CD4-positive, alpha-beta T cell (primary cell): ENCODE measurements at regions of chr2 and their contacts with region 1.

Region 1: GRCh38 chr2:74833418-74834233 is at the start of gene HK2:
- DNase-seq: peak; percentile 54 to 92 (median 72)
- ATAC-seq: peak; percentile 84
- H3K4me3 ChIP-seq: peak within 1 kb of the TSS; percentile 75
- H3K4me3 Mint-ChIP-seq: peak within 1 kb of the TSS; percentile 94
- H3K27ac ChIP-seq: peak within 1 kb of the TSS in 1 of 2 donors; percentile 27
- H3K27ac Mint-ChIP-seq: peak within 1 kb of the TSS; percentile 84
- H3K4me1 ChIP-seq: peaks cover 42% of the 10 kb centered on the region
- H3K4me1 Mint-ChIP-seq: peaks cover 36% of the 10 kb centered on the region
- H3K27me3 ChIP-seq: no peaks in the 10 kb centered on the region
- H3K27me3 Mint-ChIP-seq: no peaks in the 10 kb centered on the region
- CTCF ChIP-seq: no peak
- total RNA-seq, gene HK2: 7.7 to 8.9 TPM

Region 2: DNA sequence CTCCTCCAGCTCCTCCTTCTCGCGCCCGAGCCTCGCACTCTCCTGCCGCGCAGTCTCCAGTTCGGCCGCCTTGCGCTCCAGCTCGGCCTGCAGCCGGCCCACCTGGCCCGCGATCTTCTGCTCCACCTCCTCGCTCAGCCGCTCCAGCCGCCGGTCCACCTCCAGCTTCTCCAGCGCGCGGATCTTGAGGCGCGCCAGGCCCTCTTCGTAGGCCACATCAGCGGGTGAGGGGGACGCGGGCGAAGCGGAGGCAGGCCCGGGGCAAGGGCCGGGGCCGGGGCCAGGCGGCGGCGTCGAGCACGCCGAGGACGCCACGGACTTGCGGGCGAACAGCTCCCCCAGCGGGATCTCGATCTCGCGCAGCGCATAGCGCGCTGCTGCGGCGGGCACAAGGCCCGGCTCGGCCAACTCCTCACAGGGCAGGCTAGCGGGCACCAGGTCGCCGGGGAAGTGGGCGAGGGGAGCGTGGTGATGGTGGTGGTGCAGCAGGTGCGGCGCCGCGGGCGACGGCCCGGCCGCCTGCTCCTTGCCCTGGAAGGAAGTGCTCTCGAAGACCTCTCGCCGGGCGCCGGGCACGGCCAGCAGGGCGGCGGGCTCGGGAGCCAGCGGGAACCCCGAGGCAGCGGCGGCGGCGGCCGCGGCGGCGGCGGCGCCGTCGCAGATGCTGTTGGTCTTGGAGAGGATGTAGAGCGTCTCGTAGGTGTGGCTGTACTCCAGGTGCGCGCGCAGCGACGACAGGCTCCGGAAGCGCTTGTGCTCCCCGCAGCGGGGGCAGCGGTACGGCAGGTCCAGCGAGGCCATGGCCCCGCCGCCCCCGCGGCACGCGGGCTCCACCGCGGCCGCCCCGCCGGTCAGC is 1564.6 kb before region 1 on chr2:
- CTCF ChIA-PET with region 1: no interaction called
- POLR2A ChIA-PET with region 1: no interaction called
- intact Hi-C with region 1: no loop called
- DNase-seq: peak; percentile 57 to 92 (median 80)
- ATAC-seq: peak; percentile 96
- H3K4me3 ChIP-seq: peak overlapping the region; percentile 58
- H3K4me3 Mint-ChIP-seq: peak overlapping the region; percentile 83
- H3K27ac ChIP-seq: no peak overlapping the region
- H3K27ac Mint-ChIP-seq: peak overlapping the region; percentile 75
- H3K4me1 ChIP-seq: peaks cover 10% of the 10 kb centered on the region
- H3K4me1 Mint-ChIP-seq: peaks cover 28% of the 10 kb centered on the region
- H3K27me3 ChIP-seq: no peaks in the 10 kb centered on the region
- H3K27me3 Mint-ChIP-seq: no peaks in the 10 kb centered on the region
- CTCF ChIP-seq: peak; percentile 13

Region 3: GRCh38 chr2:74653985-74654882 is 179.4 kb before region 1 on chr2 and contains the start of gene SEMA4F:
- CTCF ChIA-PET with region 1: no interaction called
- POLR2A ChIA-PET with region 1: interaction called, 5 read pairs
- intact Hi-C with region 1: loop called in 1 of 2 experiments (anchors 5 kb)
- DNase-seq: peak; percentile 83 to 96 (median 92)
- ATAC-seq: peak; percentile 99
- H3K4me3 ChIP-seq: peak within 1 kb of the TSS; percentile 80
- H3K4me3 Mint-ChIP-seq: peak within 1 kb of the TSS; percentile 88
- H3K27ac ChIP-seq: no peak within 1 kb of the TSS
- H3K27ac Mint-ChIP-seq: peak within 1 kb of the TSS; percentile 80
- H3K4me1 ChIP-seq: peaks cover 18% of the 10 kb centered on the region
- H3K4me1 Mint-ChIP-seq: peaks cover 26% of the 10 kb centered on the region
- H3K27me3 ChIP-seq: peaks cover 2 to 5% of the 10 kb centered on the region in 2 experiments
- H3K27me3 Mint-ChIP-seq: peaks cover 14% of the 10 kb centered on the region
- CTCF ChIP-seq: no peak
- total RNA-seq, gene SEMA4F: 6.8 to 7.3 TPM

Region 4: GRCh38 chr2:74845217-74846011 is 11.8 kb after region 1 on chr2:
- CTCF ChIA-PET with region 1: interaction called, 35 read pairs
- POLR2A ChIA-PET with region 1: interaction called, 169 read pairs
- intact Hi-C with region 1: loop called (anchors 1 to 2 kb)
- DNase-seq: peak in 10 of 14 experiments; percentile 13 to 79 (median 42)
- ATAC-seq: no peak
- H3K4me3 ChIP-seq: peak overlapping the region; percentile 5
- H3K4me3 Mint-ChIP-seq: peak overlapping the region; percentile 84
- H3K27ac ChIP-seq: no peak overlapping the region
- H3K27ac Mint-ChIP-seq: peak overlapping the region; percentile 98
- H3K4me1 ChIP-seq: peaks cover 96% of the 10 kb centered on the region
- H3K4me1 Mint-ChIP-seq: peaks cover 99% of the 10 kb centered on the region
- H3K27me3 ChIP-seq: no peaks in the 10 kb centered on the region
- H3K27me3 Mint-ChIP-seq: no peaks in the 10 kb centered on the region
- CTCF ChIP-seq: no peak

Region 5: GRCh38 chr2:74876081-74876886 is 42.7 kb after region 1 on chr2:
- CTCF ChIA-PET with region 1: interaction called, 8 read pairs
- POLR2A ChIA-PET with region 1: interaction called, 12 read pairs
- intact Hi-C with region 1: loop called (anchors 1 to 2 kb)
- DNase-seq: peak; percentile 6 to 79 (median 34)
- ATAC-seq: peak; percentile 80
- H3K4me3 ChIP-seq: no peak overlapping the region
- H3K4me3 Mint-ChIP-seq: no peak overlapping the region
- H3K27ac ChIP-seq: no peak overlapping the region
- H3K27ac Mint-ChIP-seq: no peak overlapping the region
- H3K4me1 ChIP-seq: peaks cover 6% of the 10 kb centered on the region
- H3K4me1 Mint-ChIP-seq: peaks cover 7% of the 10 kb centered on the region
- H3K27me3 ChIP-seq: no peaks in the 10 kb centered on the region
- H3K27me3 Mint-ChIP-seq: no peaks in the 10 kb centered on the region
- CTCF ChIP-seq: peak; percentile 72

Region 6: DNA sequence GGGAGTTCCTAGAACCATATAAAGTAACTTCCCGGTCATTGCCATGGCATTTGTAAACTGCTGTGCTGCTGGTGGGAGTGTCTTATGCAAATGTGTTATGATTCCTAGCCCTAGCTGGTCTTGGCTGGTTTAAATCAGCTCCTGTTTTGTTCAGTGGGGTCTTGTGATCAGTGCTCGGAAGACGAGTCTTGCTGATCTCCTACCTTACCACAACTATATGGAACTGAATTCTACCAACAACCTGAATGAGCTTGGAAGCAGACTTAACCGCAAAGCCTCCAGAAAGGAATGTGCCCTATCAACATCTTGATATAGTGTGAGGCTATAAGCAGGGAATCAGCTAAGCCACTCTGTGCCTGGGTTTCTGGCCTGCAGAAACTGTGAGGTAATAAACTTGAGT is 158.4 kb after region 1 on chr2:
- CTCF ChIA-PET with region 1: no interaction called
- POLR2A ChIA-PET with region 1: no interaction called
- intact Hi-C with region 1: no loop called
- DNase-seq: no peak
- ATAC-seq: no peak
- H3K4me3 ChIP-seq: no peak overlapping the region
- H3K4me3 Mint-ChIP-seq: no peak overlapping the region
- H3K27ac ChIP-seq: no peak overlapping the region
- H3K27ac Mint-ChIP-seq: no peak overlapping the region
- H3K4me1 ChIP-seq: no peaks in the 10 kb centered on the region
- H3K4me1 Mint-ChIP-seq: no peaks in the 10 kb centered on the region
- H3K27me3 ChIP-seq: no peaks in the 10 kb centered on the region
- H3K27me3 Mint-ChIP-seq: no peaks in the 10 kb centered on the region
- CTCF ChIP-seq: no peak

Region 7: GRCh38 chr2:75646583-75647425 is 813.2 kb after region 1 on chr2 and contains the start of gene MRPL19:
- CTCF ChIA-PET with region 1: no interaction called
- POLR2A ChIA-PET with region 1: no interaction called
- intact Hi-C with region 1: loop called in 1 of 2 experiments (anchors 10 kb)
- DNase-seq: peak; percentile 52 to 89 (median 68)
- ATAC-seq: peak; percentile 96
- H3K4me3 ChIP-seq: peak within 1 kb of the TSS; percentile 98
- H3K4me3 Mint-ChIP-seq: peak within 1 kb of the TSS; percentile 96
- H3K27ac ChIP-seq: peak within 1 kb of the TSS; percentile 46 to 50
- H3K27ac Mint-ChIP-seq: peak within 1 kb of the TSS; percentile 92
- H3K4me1 ChIP-seq: peaks cover 16% of the 10 kb centered on the region
- H3K4me1 Mint-ChIP-seq: peaks cover 49% of the 10 kb centered on the region
- H3K27me3 ChIP-seq: no peaks in the 10 kb centered on the region
- H3K27me3 Mint-ChIP-seq: no peaks in the 10 kb centered on the region
- CTCF ChIP-seq: no peak
- total RNA-seq, gene MRPL19: 10.7 to 14.9 TPM